Heart left ventricle (tissue), 16 donors: ENCODE measurements at regions of chr20 and their contacts with region 1.

Region 1: GRCh38 chr20:35994994-35995453 is 26.6 kb downstream of the CNBD2 start:
- DNase-seq: peak; percentile 77 to 90 (median 83)
- ATAC-seq: peak; percentile 94 to 97 (median 95)
- H3K4me3 ChIP-seq: no peak overlapping the region
- H3K27ac ChIP-seq: no peak overlapping the region
- H3K4me1 ChIP-seq: peaks cover 0 to 10% (median 0%) of the 10 kb centered on the region in 12 donors
- H3K27me3 ChIP-seq: no peaks in the 10 kb centered on the region
- CTCF ChIP-seq: peak; percentile 78 to 96 (median 90)
- POLR2A ChIP-seq: no peak

Region 2: GRCh38 chr20:35939264-35939663 is 55.8 kb before region 1 on chr20:
- intact Hi-C with region 1: no loop called
- DNase-seq: no peak
- ATAC-seq: no peak
- H3K4me3 ChIP-seq: no peak overlapping the region
- H3K27ac ChIP-seq: no peak overlapping the region
- H3K4me1 ChIP-seq: no peaks in the 10 kb centered on the region
- H3K27me3 ChIP-seq: no peaks in the 10 kb centered on the region
- CTCF ChIP-seq: no peak
- POLR2A ChIP-seq: no peak

Region 3: DNA sequence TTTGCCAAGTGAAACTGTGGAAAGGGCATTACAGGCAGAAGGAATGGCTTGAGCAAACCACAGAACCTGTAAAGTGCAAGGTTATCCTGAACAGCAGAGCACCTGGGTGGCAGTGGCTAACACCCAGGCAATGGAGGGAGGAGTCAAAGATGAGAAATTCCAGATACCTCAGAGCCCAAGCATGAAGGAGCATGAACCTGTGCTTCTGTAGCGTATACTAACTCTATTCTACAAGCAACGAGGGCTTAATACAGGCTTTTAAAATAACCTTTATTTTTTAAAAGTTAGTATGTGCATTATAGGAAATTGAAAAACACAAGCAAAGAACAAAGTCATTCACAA is 50.3 kb after region 1 on chr20:
- intact Hi-C with region 1: loop called in 1 of 10 experiments (anchors 5 kb)
- DNase-seq: no peak
- ATAC-seq: peak in 1 of 4 donors; percentile 7
- H3K4me3 ChIP-seq: no peak overlapping the region
- H3K27ac ChIP-seq: no peak overlapping the region
- H3K4me1 ChIP-seq: peaks cover 0 to 38% (median 24%) of the 10 kb centered on the region in 12 donors
- H3K27me3 ChIP-seq: no peaks in the 10 kb centered on the region
- CTCF ChIP-seq: no peak
- POLR2A ChIP-seq: no peak

Region 4: GRCh38 chr20:36132802-36133211 is 137.8 kb after region 1 on chr20:
- intact Hi-C with region 1: loop called in 9 of 10 experiments (anchors 1 to 2 kb)
- DNase-seq: peak in 1 of 5 donors; percentile 32
- ATAC-seq: no peak
- H3K4me3 ChIP-seq: no peak overlapping the region
- H3K27ac ChIP-seq: no peak overlapping the region
- H3K4me1 ChIP-seq: no peaks in the 10 kb centered on the region
- H3K27me3 ChIP-seq: no peaks in the 10 kb centered on the region
- CTCF ChIP-seq: no peak
- POLR2A ChIP-seq: no peak

Region 5: GRCh38 chr20:36144336-36144735 is 149.3 kb after region 1 on chr20:
- intact Hi-C with region 1: loop called in 5 of 10 experiments (anchors 1 to 2 kb)
- DNase-seq: no peak
- ATAC-seq: no peak
- H3K4me3 ChIP-seq: no peak overlapping the region
- H3K27ac ChIP-seq: peak overlapping the region in 3 of 12 donors; percentile 22 to 52 (median 28)
- H3K4me1 ChIP-seq: peaks cover 0 to 49% (median 18%) of the 10 kb centered on the region in 12 donors
- H3K27me3 ChIP-seq: no peaks in the 10 kb centered on the region
- CTCF ChIP-seq: no peak
- POLR2A ChIP-seq: no peak

Region 6: GRCh38 chr20:36199345-36200257 is 204.6 kb after region 1 on chr20:
- intact Hi-C with region 1: loop called in 9 of 10 experiments (anchors 1 to 10 kb)
- DNase-seq: peak; percentile 64 to 79 (median 74)
- ATAC-seq: peak in 3 of 4 donors; percentile 73 to 82 (median 74)
- H3K4me3 ChIP-seq: no peak overlapping the region
- H3K27ac ChIP-seq: no peak overlapping the region
- H3K4me1 ChIP-seq: peaks cover 0 to 6% (median 0%) of the 10 kb centered on the region in 12 donors
- H3K27me3 ChIP-seq: no peaks in the 10 kb centered on the region
- CTCF ChIP-seq: peak; percentile 84 to 96 (median 90)
- POLR2A ChIP-seq: no peak

Region 7: GRCh38 chr20:36439040-36439730 is 444.2 kb after region 1 on chr20:
- intact Hi-C with region 1: loop called in 3 of 10 experiments (anchors 5 to 10 kb)
- DNase-seq: peak; percentile 37 to 80 (median 53)
- ATAC-seq: peak in 3 of 4 donors; percentile 59 to 72 (median 63)
- H3K4me3 ChIP-seq: no peak overlapping the region
- H3K27ac ChIP-seq: no peak overlapping the region
- H3K4me1 ChIP-seq: peaks cover 0 to 8% (median 0%) of the 10 kb centered on the region in 12 donors
- H3K27me3 ChIP-seq: peaks cover 0 to 16% (median 3%) of the 10 kb centered on the region in 9 donors
- CTCF ChIP-seq: peak; percentile 75 to 90 (median 82)
- POLR2A ChIP-seq: no peak